ENCODE measurements at regions of chr1 and their contacts with region 1.

Region 1: DNA sequence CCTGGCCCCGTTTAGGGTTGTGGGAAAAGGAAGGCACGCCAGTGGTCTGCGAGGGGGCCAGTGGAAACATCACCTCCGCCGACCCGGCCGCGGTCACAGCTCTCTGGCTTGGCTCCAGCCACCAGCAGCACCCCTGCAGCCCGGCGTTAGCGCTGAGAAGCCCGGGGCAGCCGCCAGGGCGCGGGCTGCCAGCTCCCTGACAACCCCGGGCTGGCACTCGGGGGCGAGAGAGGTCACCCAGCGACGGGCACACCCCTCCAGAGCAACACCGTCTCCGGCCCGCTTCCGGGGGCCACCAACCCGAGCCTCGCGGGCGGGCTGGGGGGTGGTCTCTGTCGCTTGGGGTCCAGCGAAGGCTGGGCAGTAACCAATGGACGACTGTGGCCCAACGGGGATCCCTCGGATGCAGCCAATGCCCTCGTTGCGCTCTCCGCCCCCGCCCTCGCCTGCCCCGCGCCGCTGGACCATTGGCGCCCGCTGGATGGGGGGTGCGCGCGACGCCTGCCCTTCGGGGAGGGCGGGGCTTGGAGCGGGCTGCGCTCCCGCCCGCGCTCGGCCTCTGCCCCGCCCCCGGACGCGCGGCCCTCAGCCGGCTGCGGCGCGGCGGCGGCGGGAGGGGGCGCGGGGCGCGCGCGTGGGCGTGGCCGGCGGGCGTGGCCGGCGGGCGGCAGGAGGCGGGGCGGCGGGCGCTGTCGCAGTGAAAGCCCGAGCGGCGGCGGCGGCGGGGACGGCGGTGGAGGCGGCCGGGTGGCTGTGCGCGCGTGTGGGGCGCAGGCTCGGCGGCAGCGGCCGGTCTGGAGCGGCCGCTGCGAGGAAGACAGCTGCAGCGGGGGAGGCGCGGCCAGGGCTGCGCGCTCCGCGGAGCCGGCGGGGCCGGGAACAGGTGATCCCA is at the start of gene MAN1C1:
- DNase-seq: peak; percentile 87
- H3K4me3 ChIP-seq: peak within 1 kb of the TSS; percentile 69 to 97 (median 90)
- H3K27ac ChIP-seq: peak within 1 kb of the TSS; percentile 75 to 90 (median 82)
- H3K4me1 ChIP-seq: peaks cover 9 to 39% (median 26%) of the 10 kb centered on the region in 4 donors
- H3K27me3 ChIP-seq: peaks cover 24% of the 10 kb centered on the region
- CTCF ChIP-seq: peak; percentile 40 to 61 (median 55)
- EP300 ChIP-seq: no peak
- POLR2A ChIP-seq: no peak
- total RNA-seq, gene MAN1C1: 2.4 to 6.8 (median 4.3) TPM

Region 2: GRCh38 chr1:25430666-25431505 is 185.5 kb before region 1 on chr1 and contains the start of gene MACO1:
- in situ Hi-C with region 1: no loop called
- intact Hi-C with region 1: no loop called
- DNase-seq: peak; percentile 98
- H3K4me3 ChIP-seq: peak within 1 kb of the TSS; percentile 95 to 100 (median 98)
- H3K27ac ChIP-seq: peak within 1 kb of the TSS; percentile 94 to 97 (median 96)
- H3K4me1 ChIP-seq: peaks cover 20 to 48% (median 27%) of the 10 kb centered on the region in 4 donors
- H3K27me3 ChIP-seq: no peaks in the 10 kb centered on the region
- CTCF ChIP-seq: peak in 1 of 5 experiments; percentile 17
- EP300 ChIP-seq: no peak
- POLR2A ChIP-seq: no peak
- total RNA-seq, gene MACO1: 11.3 to 24.9 (median 19.0) TPM

Region 3: GRCh38 chr1:25572708-25573600 is 43.4 kb before region 1 on chr1:
- in situ Hi-C with region 1: no loop called
- intact Hi-C with region 1: no loop called
- DNase-seq: peak; percentile 72
- H3K4me3 ChIP-seq: no peak overlapping the region
- H3K27ac ChIP-seq: peak overlapping the region in 1 of 4 donors; percentile 7
- H3K4me1 ChIP-seq: peaks cover 3 to 29% (median 13%) of the 10 kb centered on the region in 4 donors
- H3K27me3 ChIP-seq: no peaks in the 10 kb centered on the region
- CTCF ChIP-seq: peak; percentile 70 to 84 (median 74)
- EP300 ChIP-seq: no peak
- POLR2A ChIP-seq: no peak

Region 4: GRCh38 chr1:25695090-25695770 is 78.9 kb after region 1 on chr1:
- in situ Hi-C with region 1: no loop called
- intact Hi-C with region 1: loop called (anchors 2 kb)
- DNase-seq: peak; percentile 57
- H3K4me3 ChIP-seq: no peak overlapping the region
- H3K27ac ChIP-seq: peak overlapping the region; percentile 71 to 91 (median 82)
- H3K4me1 ChIP-seq: peaks cover 13 to 59% (median 30%) of the 10 kb centered on the region in 4 donors
- H3K27me3 ChIP-seq: no peaks in the 10 kb centered on the region
- CTCF ChIP-seq: peak in 1 of 5 experiments; percentile 9
- EP300 ChIP-seq: peak; percentile 67
- POLR2A ChIP-seq: no peak

Region 5: GRCh38 chr1:25743826-25744581 is 127.7 kb after region 1 on chr1:
- in situ Hi-C with region 1: no loop called
- intact Hi-C with region 1: loop called (anchors 5 kb)
- DNase-seq: peak; percentile 61
- H3K4me3 ChIP-seq: no peak overlapping the region
- H3K27ac ChIP-seq: peak overlapping the region; percentile 80 to 91 (median 84)
- H3K4me1 ChIP-seq: peaks cover 13 to 28% (median 18%) of the 10 kb centered on the region in 4 donors
- H3K27me3 ChIP-seq: no peaks in the 10 kb centered on the region
- CTCF ChIP-seq: peak; percentile 37 to 55 (median 43)
- EP300 ChIP-seq: no peak
- POLR2A ChIP-seq: no peak

Measured in transverse colon (tissue), 4 donors.